ENCODE measurements at regions of chr13 and their contacts with region 1.

Region 1: GRCh38 chr13:32150794-32151193 is 119.2 kb downstream of the FRY start:
- DNase-seq: peak; percentile 59 to 92
- H3K4me3 ChIP-seq: no peak overlapping the region
- H3K27ac ChIP-seq: peak overlapping the region; percentile 86 to 88
- H3K4me1 ChIP-seq: peaks cover 4 to 22% of the 10 kb centered on the region in 2 donors
- H3K27me3 ChIP-seq: no peaks in the 10 kb centered on the region
- CTCF ChIP-seq: no peak

Region 2: DNA sequence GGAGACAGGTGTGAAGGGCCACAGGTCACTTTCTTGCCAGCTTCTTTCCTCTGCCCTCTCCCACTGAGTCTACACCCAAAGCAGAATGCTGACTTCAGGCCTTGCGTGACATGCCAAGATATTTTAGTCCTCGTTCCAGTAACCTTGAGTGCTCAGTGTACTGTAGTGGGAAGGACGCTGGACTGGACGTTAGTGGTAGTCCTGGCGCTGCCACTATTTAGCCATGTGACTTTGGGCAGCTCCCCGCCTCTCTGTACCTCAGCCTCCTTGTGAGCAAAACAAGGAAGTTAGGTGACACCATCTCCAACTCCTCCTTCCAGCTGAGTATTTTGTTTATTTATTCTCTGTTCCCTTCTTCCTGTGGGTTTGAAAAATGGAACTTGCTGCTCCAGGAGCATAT is 33.1 kb before region 1 on chr13:
- intact Hi-C with region 1: loop called (anchors 5 kb)
- DNase-seq: peak; percentile 43 to 90
- H3K4me3 ChIP-seq: peak overlapping the region in 1 of 2 donors; percentile 17
- H3K27ac ChIP-seq: peak overlapping the region; percentile 27 to 69
- H3K4me1 ChIP-seq: peaks cover 3 to 25% of the 10 kb centered on the region in 2 donors
- H3K27me3 ChIP-seq: no peaks in the 10 kb centered on the region
- CTCF ChIP-seq: no peak

Region 3: GRCh38 chr13:32125221-32125631 is 25.6 kb before region 1 on chr13:
- intact Hi-C with region 1: loop called (anchors 2 kb)
- DNase-seq: peak in 1 of 2 donors; percentile 79
- H3K4me3 ChIP-seq: no peak overlapping the region
- H3K27ac ChIP-seq: peak overlapping the region; percentile 85 to 91
- H3K4me1 ChIP-seq: peaks cover 3 to 16% of the 10 kb centered on the region in 2 donors
- H3K27me3 ChIP-seq: no peaks in the 10 kb centered on the region
- CTCF ChIP-seq: no peak